ENCODE measurements at regions of chr20 and their contacts with region 1.

Region 1: GRCh38 chr20:45138561-45139300 is 14.5 kb upstream of the WFDC12 start:
- DNase-seq: peak; percentile 92
- ATAC-seq: peak; percentile 91
- H3K4me3 Mint-ChIP-seq: no peak overlapping the region
- H3K27ac Mint-ChIP-seq: no peak overlapping the region
- H3K4me1 Mint-ChIP-seq: no peaks in the 10 kb centered on the region
- H3K27me3 Mint-ChIP-seq: peaks cover 9% of the 10 kb centered on the region

Region 2: DNA sequence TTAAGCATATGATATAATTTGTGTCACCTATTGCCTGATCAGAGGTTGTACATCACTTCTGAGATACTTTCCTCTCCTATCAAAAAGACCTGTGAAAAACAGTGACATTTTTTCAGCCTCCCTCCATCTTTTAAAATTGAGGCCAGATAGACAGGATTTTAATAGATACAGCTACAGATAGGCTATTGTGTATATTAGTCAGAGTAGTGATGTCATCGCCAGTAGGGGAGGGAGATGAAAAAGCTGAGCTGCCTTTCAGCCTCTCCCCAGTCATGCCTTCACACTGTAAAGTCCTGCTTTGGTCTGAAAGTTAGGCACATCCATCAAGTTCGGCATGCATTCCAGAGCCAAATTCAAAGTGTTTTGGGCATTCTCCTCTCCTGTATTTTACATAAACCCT is 236.8 kb before region 1 on chr20:
- CTCF ChIA-PET with region 1: no interaction called
- POLR2A ChIA-PET with region 1: no interaction called
- intact Hi-C with region 1: no loop called
- DNase-seq: no peak
- ATAC-seq: peak; percentile 48
- H3K4me3 Mint-ChIP-seq: no peak overlapping the region
- H3K27ac Mint-ChIP-seq: peak overlapping the region; percentile 51
- H3K4me1 Mint-ChIP-seq: peaks cover 44% of the 10 kb centered on the region
- H3K27me3 Mint-ChIP-seq: no peaks in the 10 kb centered on the region

Region 3: DNA sequence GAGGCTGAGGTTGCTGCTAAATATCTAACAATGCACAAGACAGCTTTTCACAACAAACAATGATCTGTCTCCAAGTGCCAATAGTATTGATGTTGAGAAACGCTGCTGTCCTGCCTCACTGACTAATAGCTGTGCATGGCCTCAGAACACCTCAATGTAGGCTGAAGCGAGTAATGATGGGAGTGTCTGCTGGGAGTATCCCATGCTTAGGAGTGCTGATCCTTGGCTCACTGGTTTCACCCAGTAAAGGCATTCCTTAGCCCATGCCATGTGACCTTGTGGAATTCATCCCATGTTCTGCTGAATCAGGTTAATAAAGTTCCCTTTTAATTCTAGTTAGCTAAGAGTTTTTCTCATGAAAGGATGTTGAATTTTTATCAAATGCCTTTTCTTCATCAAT is 10.7 kb before region 1 on chr20:
- CTCF ChIA-PET with region 1: interaction called, 16 read pairs
- POLR2A ChIA-PET with region 1: no interaction called
- intact Hi-C with region 1: no loop called
- DNase-seq: no peak
- ATAC-seq: no peak
- H3K4me3 Mint-ChIP-seq: no peak overlapping the region
- H3K27ac Mint-ChIP-seq: no peak overlapping the region
- H3K4me1 Mint-ChIP-seq: no peaks in the 10 kb centered on the region
- H3K27me3 Mint-ChIP-seq: peaks cover 25% of the 10 kb centered on the region

Region 4: DNA sequence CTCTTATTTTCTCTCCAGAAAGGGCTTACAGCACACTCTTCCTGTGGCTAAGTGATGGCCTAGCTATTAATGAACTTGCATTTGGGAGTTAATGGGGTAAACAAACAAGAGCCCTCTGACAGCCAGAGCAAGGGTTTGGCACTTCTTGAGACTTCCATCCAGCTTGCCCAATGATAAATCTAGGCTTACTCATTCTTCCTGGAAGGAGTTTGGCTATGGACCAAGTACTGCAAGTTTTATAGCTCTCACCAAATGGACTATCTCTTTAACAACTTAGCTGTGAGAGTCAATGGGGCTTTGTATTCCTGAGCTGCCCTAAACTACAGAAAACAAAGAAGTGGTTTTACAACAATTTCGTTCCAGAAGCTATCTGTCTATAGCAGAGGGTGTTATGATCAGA is 19.2 kb after region 1 on chr20:
- CTCF ChIA-PET with region 1: interaction called, 12 read pairs
- POLR2A ChIA-PET with region 1: no interaction called
- intact Hi-C with region 1: no loop called
- DNase-seq: no peak
- ATAC-seq: no peak
- H3K4me3 Mint-ChIP-seq: no peak overlapping the region
- H3K27ac Mint-ChIP-seq: no peak overlapping the region
- H3K4me1 Mint-ChIP-seq: no peaks in the 10 kb centered on the region
- H3K27me3 Mint-ChIP-seq: peaks cover 40% of the 10 kb centered on the region

Region 5: GRCh38 chr20:45174434-45175364 is 36.0 kb after region 1 on chr20 and contains the start of gene PI3:
- CTCF ChIA-PET with region 1: interaction called, 11 read pairs
- POLR2A ChIA-PET with region 1: no interaction called
- intact Hi-C with region 1: no loop called
- DNase-seq: no peak
- ATAC-seq: no peak
- H3K4me3 Mint-ChIP-seq: no peak within 1 kb of the TSS
- H3K27ac Mint-ChIP-seq: no peak within 1 kb of the TSS
- H3K4me1 Mint-ChIP-seq: no peaks in the 10 kb centered on the region
- H3K27me3 Mint-ChIP-seq: peaks cover 17% of the 10 kb centered on the region
- total RNA-seq, gene PI3: not detected

Region 6: GRCh38 chr20:45229264-45230056 is 90.7 kb after region 1 on chr20:
- CTCF ChIA-PET with region 1: interaction called, 17 read pairs
- POLR2A ChIA-PET with region 1: no interaction called
- intact Hi-C with region 1: loop called (anchors 1 to 2 kb)
- DNase-seq: peak; percentile 82
- ATAC-seq: peak; percentile 71
- H3K4me3 Mint-ChIP-seq: no peak overlapping the region
- H3K27ac Mint-ChIP-seq: no peak overlapping the region
- H3K4me1 Mint-ChIP-seq: peaks cover 2% of the 10 kb centered on the region
- H3K27me3 Mint-ChIP-seq: peaks cover 37% of the 10 kb centered on the region

Measured in activated CD4-positive, alpha-beta T cell treated with anti-CD3 and anti-CD28 coated beads for 36 hours (primary cell).